GM12878 (cell line): ENCODE measurements at regions of chr5 and their contacts with region 1.

Region 1: GRCh38 chr5:106818552-106818951 is 852.2 kb downstream of the EFNA5 start:
- DNase-seq: no peak
- ATAC-seq: peak; percentile 23; the same call in 1 of the 3 replicates
- H3K4me3 ChIP-seq: no peak overlapping the region
- H3K27ac ChIP-seq: no peak overlapping the region
- H3K4me1 ChIP-seq: no peaks in the 10 kb centered on the region
- H3K27me3 ChIP-seq: no peaks in the 10 kb centered on the region
- CTCF ChIP-seq: no peak
- EP300 ChIP-seq: no peak
- POLR2A ChIP-seq: no peak
- RAD21 ChIP-seq: no peak

Region 2: GRCh38 chr5:106780352-106780751 is 38.2 kb before region 1 on chr5:
- CTCF ChIA-PET with region 1: no interaction called
- POLR2A ChIA-PET with region 1: no interaction called
- RAD21 ChIA-PET with region 1: no interaction called
- SMC1A ChIA-PET with region 1: no interaction called
- in situ Hi-C with region 1: no loop called
- intact Hi-C with region 1: loop called (anchors 2 kb)
- DNase-seq: no peak
- ATAC-seq: no peak
- H3K4me3 ChIP-seq: no peak overlapping the region
- H3K27ac ChIP-seq: no peak overlapping the region
- H3K4me1 ChIP-seq: no peaks in the 10 kb centered on the region
- H3K27me3 ChIP-seq: no peaks in the 10 kb centered on the region
- CTCF ChIP-seq: no peak
- EP300 ChIP-seq: no peak
- POLR2A ChIP-seq: no peak
- RAD21 ChIP-seq: no peak

Region 3: GRCh38 chr5:106921567-106921966 is 103.0 kb after region 1 on chr5:
- CTCF ChIA-PET with region 1: no interaction called
- POLR2A ChIA-PET with region 1: no interaction called
- RAD21 ChIA-PET with region 1: no interaction called
- SMC1A ChIA-PET with region 1: no interaction called
- in situ Hi-C with region 1: no loop called
- intact Hi-C with region 1: no loop called
- DNase-seq: no peak
- ATAC-seq: peak; percentile 48; the same call in 2 of the 3 replicates
- H3K4me3 ChIP-seq: no peak overlapping the region
- H3K27ac ChIP-seq: no peak overlapping the region
- H3K4me1 ChIP-seq: no peaks in the 10 kb centered on the region
- H3K27me3 ChIP-seq: no peaks in the 10 kb centered on the region
- CTCF ChIP-seq: no peak
- EP300 ChIP-seq: no peak
- POLR2A ChIP-seq: no peak
- RAD21 ChIP-seq: no peak